ENCODE measurements at regions of chr18 and their contacts with region 1.

Region 1: GRCh38 chr18:25764777-25765176 is 325.6 kb downstream of the SS18 start:
- DNase-seq: no peak
- H3K4me3 ChIP-seq: no peak overlapping the region
- H3K27ac ChIP-seq: no peak overlapping the region
- H3K4me1 ChIP-seq: no peaks in the 10 kb centered on the region
- H3K27me3 ChIP-seq: no peaks in the 10 kb centered on the region
- CTCF ChIP-seq: no peak
- POLR2A ChIP-seq: no peak

Region 2: GRCh38 chr18:26185267-26185666 is 420.5 kb after region 1 on chr18:
- intact Hi-C with region 1: loop called in 1 of 2 experiments (anchors 10 kb)
- DNase-seq: no peak
- H3K4me3 ChIP-seq: no peak overlapping the region
- H3K27ac ChIP-seq: no peak overlapping the region
- H3K4me1 ChIP-seq: no peaks in the 10 kb centered on the region
- H3K27me3 ChIP-seq: no peaks in the 10 kb centered on the region
- CTCF ChIP-seq: peak in 2 of 6 experiments; percentile 6 to 18
- POLR2A ChIP-seq: no peak

Measured in adrenal gland (tissue), 19 donors.